Activated T-helper 2 cell treated with anti-CD3 and anti-CD28 coated beads, Interferon-gamma antibody, Interleukin-2, Interleukin-4, amounts not matched to agents 10 μg/mL and 5 μg/mL and 100 μg/mL, durations not matched to agents 14 hours and 24 hours and 36 hours (primary cell): ENCODE measurements at regions of chr1 and their contacts with region 1.

Region 1: GRCh38 chr1:161098210-161099068 is at the start of gene KLHDC9:
- DNase-seq: peak; percentile 63
- H3K4me3 Mint-ChIP-seq: peak within 1 kb of the TSS; percentile 78
- H3K27ac Mint-ChIP-seq: peak within 1 kb of the TSS; percentile 84
- H3K4me1 Mint-ChIP-seq: peaks cover 36% of the 10 kb centered on the region
- H3K27me3 Mint-ChIP-seq: no peaks in the 10 kb centered on the region
- total RNA-seq, gene KLHDC9: not detected in 2 replicates

Region 2: DNA sequence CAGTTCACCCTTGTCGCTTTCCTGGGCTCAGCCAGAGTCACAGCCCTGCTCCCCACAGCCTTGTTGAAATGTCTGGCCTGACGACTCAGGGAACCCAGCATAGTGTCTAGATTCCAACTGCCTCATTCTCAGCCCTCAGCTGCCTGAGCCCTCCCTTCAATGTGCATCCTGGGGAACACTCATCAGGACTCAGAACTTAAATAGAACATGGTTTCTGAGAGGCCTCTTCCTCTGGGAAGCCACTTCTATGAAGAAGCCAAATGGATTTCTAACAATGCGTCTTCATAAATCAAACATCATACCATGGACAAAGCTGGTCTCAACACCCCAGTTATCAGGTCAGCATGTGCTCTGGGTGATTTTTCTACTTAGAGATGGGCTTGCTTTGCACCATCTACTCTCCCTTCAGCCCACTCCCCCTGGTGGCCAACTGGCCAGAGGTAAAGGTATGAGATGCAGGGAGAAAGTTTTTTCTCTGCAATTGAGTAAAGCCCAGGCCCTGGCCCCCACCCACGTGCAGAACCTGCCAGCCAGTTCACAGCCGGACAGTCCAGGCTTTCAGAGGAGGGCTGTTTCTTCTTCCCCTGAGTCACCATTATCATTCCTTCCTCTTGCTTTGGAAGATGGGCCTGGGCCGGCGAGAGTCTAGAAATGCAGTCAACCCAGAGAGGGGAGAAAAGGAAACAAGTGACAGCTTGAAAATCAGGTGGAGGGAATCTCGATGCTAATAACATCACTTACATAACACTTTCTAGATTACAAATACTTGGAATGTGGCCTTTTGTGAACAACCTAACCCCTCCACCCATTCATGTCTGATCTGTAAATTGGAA is 267.9 kb before region 1 on chr1:
- intact Hi-C with region 1: loop called (anchors 10 kb)
- DNase-seq: peak; percentile 59
- H3K4me3 Mint-ChIP-seq: no peak overlapping the region
- H3K27ac Mint-ChIP-seq: no peak overlapping the region
- H3K4me1 Mint-ChIP-seq: peaks cover 13% of the 10 kb centered on the region
- H3K27me3 Mint-ChIP-seq: no peaks in the 10 kb centered on the region

Region 3: DNA sequence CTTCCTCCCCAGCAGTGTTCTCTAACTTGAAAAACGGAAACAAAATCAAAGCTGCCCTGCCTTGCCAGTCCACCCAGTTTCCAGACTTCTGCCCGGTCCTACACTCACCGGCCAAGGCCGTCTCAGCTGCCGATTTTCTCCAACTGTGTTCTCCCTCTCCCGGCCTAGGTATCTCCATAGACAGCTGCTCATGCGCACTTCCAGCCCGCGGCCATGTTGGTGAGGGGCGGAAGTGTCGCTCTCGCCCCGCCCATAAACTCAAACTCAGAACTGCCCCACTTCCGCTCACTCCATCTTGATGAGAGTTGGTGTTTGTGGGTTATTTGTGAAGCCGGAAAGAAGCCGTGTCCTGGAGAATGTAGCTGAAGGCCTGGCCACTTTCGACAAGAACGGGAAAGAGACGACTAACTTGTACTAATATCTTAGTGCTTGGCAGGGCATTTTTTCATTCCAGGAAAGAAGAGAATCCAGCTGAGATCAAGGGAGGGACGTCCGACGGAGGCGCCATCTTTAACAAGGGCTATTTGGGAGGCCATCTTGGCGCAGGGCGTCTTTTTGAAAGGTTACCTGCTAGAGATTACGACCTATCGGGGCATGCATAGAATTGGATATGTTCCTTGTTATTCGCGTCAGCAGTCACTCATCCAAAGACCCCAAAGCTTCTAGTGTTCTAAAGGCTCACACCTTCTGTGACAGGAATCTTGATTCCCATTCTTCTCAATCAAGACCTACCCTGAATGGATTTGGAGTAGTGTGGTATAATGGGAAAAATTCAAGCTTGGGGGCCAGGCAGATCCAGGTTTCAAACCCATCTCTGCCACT is 52.5 kb before region 1 on chr1 and contains the start of gene USF1:
- intact Hi-C with region 1: loop called (anchors 1 kb)
- DNase-seq: peak; percentile 92
- H3K4me3 Mint-ChIP-seq: peak within 1 kb of the TSS; percentile 95
- H3K27ac Mint-ChIP-seq: peak within 1 kb of the TSS; percentile 100
- H3K4me1 Mint-ChIP-seq: peaks cover 33% of the 10 kb centered on the region
- H3K27me3 Mint-ChIP-seq: no peaks in the 10 kb centered on the region
- total RNA-seq, gene USF1: 49.1 and 53.2 TPM in 2 replicates

Region 4: DNA sequence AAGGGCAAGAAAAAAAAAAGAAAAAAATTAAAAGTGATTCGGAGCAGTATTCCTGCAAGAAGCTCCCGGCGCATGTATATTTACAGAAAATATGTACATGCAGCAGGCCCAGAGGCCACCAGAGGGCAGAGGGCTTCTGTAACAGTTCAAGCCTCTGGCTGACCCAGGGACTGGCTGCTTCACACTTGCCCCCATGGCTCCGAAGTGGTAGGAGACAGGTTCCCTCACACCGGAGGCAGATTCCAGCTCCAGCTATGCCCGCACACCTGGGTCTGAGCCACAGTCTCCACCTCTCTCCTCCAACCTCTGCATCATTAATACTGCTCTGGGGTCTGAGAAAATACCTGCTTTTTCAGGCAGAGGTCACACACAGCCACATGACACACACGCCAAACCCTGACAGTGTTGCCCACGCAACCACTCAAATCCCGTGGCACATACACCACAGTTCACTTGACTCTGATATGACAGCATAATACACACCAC is 26.5 kb before region 1 on chr1:
- intact Hi-C with region 1: loop called (anchors 1 kb)
- DNase-seq: no peak
- H3K4me3 Mint-ChIP-seq: no peak overlapping the region
- H3K27ac Mint-ChIP-seq: no peak overlapping the region
- H3K4me1 Mint-ChIP-seq: peaks cover 29% of the 10 kb centered on the region
- H3K27me3 Mint-ChIP-seq: no peaks in the 10 kb centered on the region

Region 5: DNA sequence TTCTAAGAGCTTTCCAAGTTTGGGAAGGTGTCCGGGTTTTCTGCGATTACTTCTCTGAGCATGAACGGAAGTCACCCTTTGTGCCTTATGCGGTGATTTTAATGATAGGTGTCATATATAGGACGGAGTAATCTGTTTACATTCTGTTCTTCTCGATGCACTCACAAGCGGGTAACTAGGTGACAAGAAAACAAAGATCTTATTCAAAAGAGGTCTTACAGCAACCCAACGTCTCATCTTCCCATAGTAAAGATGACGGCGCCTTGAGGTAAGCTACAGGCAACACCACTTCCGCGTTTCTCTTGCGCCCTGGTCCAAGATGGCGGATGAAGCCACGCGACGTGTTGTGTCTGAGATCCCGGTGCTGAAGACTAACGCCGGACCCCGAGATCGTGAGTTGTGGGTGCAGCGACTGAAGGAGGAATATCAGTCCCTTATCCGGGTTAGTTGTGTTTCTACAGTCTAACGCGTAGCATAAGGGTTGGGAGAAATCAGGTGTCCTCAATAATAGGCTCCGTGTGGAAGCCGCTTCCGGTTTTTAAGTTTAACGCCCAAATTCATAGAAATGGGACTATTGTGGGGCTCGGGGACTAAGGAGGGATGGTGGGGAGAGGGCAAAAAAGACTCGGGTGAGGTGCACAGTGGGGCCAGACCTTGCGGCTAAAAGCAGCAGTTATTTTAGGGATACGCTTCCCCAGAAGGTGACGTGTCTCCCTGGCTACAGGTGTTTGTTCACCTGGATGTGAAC is 55.4 kb after region 1 on chr1 and contains the start of gene UFC1:
- intact Hi-C with region 1: loop called (anchors 1 kb)
- DNase-seq: peak; percentile 82
- H3K4me3 Mint-ChIP-seq: peak within 1 kb of the TSS; percentile 100
- H3K27ac Mint-ChIP-seq: peak within 1 kb of the TSS; percentile 100
- H3K4me1 Mint-ChIP-seq: peaks cover 22% of the 10 kb centered on the region
- H3K27me3 Mint-ChIP-seq: no peaks in the 10 kb centered on the region
- total RNA-seq, gene UFC1: 91.5 and 91.8 TPM in 2 replicates

Region 6: GRCh38 chr1:161177112-161177935 is 78.9 kb after region 1 on chr1 and contains the start of gene B4GALT3:
- intact Hi-C with region 1: no loop called
- DNase-seq: peak; percentile 92
- H3K4me3 Mint-ChIP-seq: peak within 1 kb of the TSS; percentile 99
- H3K27ac Mint-ChIP-seq: peak within 1 kb of the TSS; percentile 97
- H3K4me1 Mint-ChIP-seq: peaks cover 48% of the 10 kb centered on the region
- H3K27me3 Mint-ChIP-seq: no peaks in the 10 kb centered on the region
- total RNA-seq, gene B4GALT3: 57.5 and 57.6 TPM in 2 replicates